Activated T-helper 1 cell treated with anti-CD3 and anti-CD28 coated beads, Interleukin-12 subunit alpha, Interleukin-12 subunit beta, Interleukin-2, Interleukin-4 antibody, amounts not matched to agents 30 ng/mL and 10 ng/mL and 1 ng/mL, durations not matched to agents 14 hours and 24 hours and 36 hours (primary cell): ENCODE measurements at regions of chr10 and their contacts with region 1.

Region 1: DNA sequence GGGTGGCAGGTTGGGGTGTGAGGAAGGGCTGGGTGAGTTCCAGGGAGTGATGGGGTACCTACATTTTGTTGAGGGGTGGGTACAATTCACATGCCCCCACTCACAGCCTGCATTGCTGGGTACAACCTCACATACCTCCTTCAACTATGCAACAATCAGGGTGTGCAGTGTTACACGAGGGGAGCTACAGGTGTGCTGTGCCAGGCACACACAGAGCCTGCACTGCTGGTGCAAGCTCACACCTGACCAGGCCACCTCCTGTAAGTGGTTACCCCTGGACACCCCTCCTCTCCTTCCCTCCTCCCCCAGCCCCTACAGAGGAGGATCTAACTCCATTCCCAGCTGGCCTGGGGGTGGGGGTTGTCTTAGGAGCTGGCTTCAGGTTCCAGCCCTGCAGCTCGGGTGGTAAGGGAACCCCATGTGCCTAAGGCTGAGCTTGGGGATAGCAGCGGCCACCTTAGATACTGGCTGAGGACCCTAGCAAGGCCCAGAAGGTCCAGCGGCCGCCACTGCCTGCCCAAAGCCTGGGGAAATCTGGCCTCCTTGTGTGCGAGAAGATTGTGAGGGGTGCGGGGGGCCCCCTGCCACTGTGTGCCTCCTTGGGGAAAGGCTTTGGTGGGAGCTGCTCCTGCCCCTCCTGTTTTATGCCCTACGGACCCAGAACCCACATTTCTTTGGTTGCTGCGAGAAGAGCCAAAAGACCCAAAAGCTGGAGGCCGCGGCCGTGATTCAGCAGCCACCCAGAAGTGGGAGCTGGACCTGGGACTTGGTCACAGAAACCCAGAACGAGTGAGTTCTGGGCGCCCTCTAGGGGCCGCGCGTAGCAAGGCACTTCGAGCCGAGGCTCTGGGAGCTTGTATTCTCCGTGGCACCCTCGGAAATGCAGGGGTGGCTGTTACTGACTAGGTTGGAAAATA is 10.8 kb downstream of the TLX1 start:
- DNase-seq: peak; percentile 66
- H3K4me3 Mint-ChIP-seq: no peak overlapping the region
- H3K27ac Mint-ChIP-seq: no peak overlapping the region
- H3K4me1 Mint-ChIP-seq: peaks cover 11% of the 10 kb centered on the region
- H3K27me3 Mint-ChIP-seq: peaks cover 87% of the 10 kb centered on the region

Region 2: GRCh38 chr10:100653957-100654781 is 487.7 kb before region 1 on chr10:
- intact Hi-C with region 1: loop called (anchors 5 kb)
- DNase-seq: no peak
- H3K4me3 Mint-ChIP-seq: peak overlapping the region; percentile 57
- H3K27ac Mint-ChIP-seq: no peak overlapping the region
- H3K4me1 Mint-ChIP-seq: peaks cover 20% of the 10 kb centered on the region
- H3K27me3 Mint-ChIP-seq: peaks cover 63% of the 10 kb centered on the region

Region 3: GRCh38 chr10:101018600-101019439 is 123.1 kb before region 1 on chr10:
- intact Hi-C with region 1: loop called (anchors 1 kb)
- DNase-seq: peak; percentile 71
- H3K4me3 Mint-ChIP-seq: no peak overlapping the region
- H3K27ac Mint-ChIP-seq: no peak overlapping the region
- H3K4me1 Mint-ChIP-seq: peaks cover 17% of the 10 kb centered on the region
- H3K27me3 Mint-ChIP-seq: peaks cover 34% of the 10 kb centered on the region

Region 4: DNA sequence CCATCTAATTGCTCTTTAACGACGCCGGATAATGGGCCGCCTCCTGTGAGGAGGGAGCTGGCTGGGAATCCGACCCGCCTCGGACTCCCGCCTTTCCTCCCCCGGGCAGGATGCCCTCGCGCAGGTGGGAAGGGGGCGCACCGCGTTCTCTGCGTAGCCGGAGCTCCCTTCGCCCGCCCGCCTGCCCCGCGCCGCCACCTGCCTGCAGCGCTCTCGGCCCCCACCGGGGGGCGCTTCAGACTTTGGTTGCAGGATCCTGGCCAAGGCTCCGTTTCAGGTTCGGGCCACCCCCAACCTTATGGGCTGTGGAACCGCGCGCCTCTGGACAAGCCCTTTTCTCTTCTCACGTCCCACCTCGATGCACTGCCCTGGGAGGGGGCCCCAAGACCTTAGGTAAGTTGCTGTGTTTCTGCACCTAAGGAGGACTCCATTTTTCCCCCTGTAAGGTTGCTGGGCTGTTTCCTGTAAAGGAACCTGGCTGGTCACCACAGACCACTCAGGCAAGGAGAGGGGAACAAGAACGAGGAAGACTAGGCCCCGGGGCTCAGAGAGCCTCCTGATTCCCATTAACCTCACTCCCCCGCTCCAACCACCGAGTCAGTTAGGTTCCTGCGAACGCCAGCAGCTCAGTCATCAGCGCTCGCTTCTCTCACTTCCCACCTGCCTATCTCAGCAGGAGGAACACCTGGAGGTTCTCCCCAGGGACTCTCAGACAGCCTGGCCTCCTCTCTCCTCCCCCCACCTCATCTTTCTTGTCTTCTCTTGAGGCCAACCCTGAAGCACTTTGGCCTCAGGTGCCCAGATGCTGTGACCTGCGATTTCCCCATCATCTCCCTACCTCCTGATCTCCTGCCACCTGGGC is 91.4 kb before region 1 on chr10:
- intact Hi-C with region 1: loop called (anchors 1 kb)
- DNase-seq: peak; percentile 76
- H3K4me3 Mint-ChIP-seq: peak overlapping the region; percentile 54
- H3K27ac Mint-ChIP-seq: no peak overlapping the region
- H3K4me1 Mint-ChIP-seq: peaks cover 13% of the 10 kb centered on the region
- H3K27me3 Mint-ChIP-seq: peaks cover 46% of the 10 kb centered on the region

Region 5: GRCh38 chr10:101120884-101121653 is 20.8 kb before region 1 on chr10:
- intact Hi-C with region 1: loop called (anchors 2 kb)
- DNase-seq: no peak
- H3K4me3 Mint-ChIP-seq: peak overlapping the region; percentile 88
- H3K27ac Mint-ChIP-seq: peak overlapping the region; percentile 78
- H3K4me1 Mint-ChIP-seq: peaks cover 33% of the 10 kb centered on the region
- H3K27me3 Mint-ChIP-seq: peaks cover 80% of the 10 kb centered on the region